PC-9 (cell line): ENCODE measurements at regions of chr14 and their contacts with region 1.

Region 1: GRCh38 chr14:80987235-80988032 is 32.0 kb downstream of the TSHR start:
- DNase-seq: peak; percentile 69 to 72
- H3K4me3 ChIP-seq: peak overlapping the region; percentile 4; the same call in 1 of the 2 replicates
- H3K27ac ChIP-seq: no peak overlapping the region
- H3K4me1 ChIP-seq: peaks cover 7% of the 10 kb centered on the region; the same call in 1 of the 2 replicates
- H3K27me3 ChIP-seq: peaks cover 10% of the 10 kb centered on the region; the same call in 1 of the 2 replicates
- CTCF ChIP-seq: peak; percentile 98

Region 2: GRCh38 chr14:80862983-80863382 is 124.5 kb before region 1 on chr14:
- CTCF ChIA-PET with region 1: no interaction called
- POLR2A ChIA-PET with region 1: no interaction called
- intact Hi-C with region 1: loop called (anchors 5 kb)
- DNase-seq: no peak
- H3K4me3 ChIP-seq: no peak overlapping the region
- H3K27ac ChIP-seq: no peak overlapping the region
- H3K4me1 ChIP-seq: no peaks in the 10 kb centered on the region
- H3K27me3 ChIP-seq: no peaks in the 10 kb centered on the region
- CTCF ChIP-seq: peak; percentile 70

Region 3: DNA sequence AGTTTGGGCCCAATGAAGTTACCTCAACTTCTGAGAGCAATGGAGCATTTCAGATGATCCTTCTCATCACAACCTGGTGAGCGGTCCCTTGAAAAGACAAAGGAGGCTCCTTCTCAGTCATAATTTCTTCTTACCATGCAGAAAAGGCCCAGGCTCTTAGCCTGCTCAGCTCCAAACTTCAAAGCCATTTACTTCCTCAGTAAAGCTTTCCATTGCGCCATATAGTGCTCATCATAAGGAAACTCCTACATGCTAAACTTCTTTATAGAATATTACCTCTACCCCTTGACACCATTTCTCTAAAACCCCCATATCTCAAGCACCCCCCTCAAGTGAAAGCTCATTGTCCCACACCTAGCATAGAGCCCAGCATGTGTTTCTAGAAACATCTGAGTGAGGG is 106.2 kb after region 1 on chr14:
- CTCF ChIA-PET with region 1: no interaction called
- POLR2A ChIA-PET with region 1: no interaction called
- intact Hi-C with region 1: no loop called
- DNase-seq: no peak
- H3K4me3 ChIP-seq: no peak overlapping the region
- H3K27ac ChIP-seq: no peak overlapping the region
- H3K4me1 ChIP-seq: no peaks in the 10 kb centered on the region
- H3K27me3 ChIP-seq: peaks cover 21% of the 10 kb centered on the region; the same call in 1 of the 2 replicates
- CTCF ChIP-seq: no peak